Activated CD4-positive, alpha-beta memory T cell treated with anti-CD3 and anti-CD28 coated beads for 36 hours (primary cell): ENCODE measurements at regions of chr7 and their contacts with region 1.

Region 1: DNA sequence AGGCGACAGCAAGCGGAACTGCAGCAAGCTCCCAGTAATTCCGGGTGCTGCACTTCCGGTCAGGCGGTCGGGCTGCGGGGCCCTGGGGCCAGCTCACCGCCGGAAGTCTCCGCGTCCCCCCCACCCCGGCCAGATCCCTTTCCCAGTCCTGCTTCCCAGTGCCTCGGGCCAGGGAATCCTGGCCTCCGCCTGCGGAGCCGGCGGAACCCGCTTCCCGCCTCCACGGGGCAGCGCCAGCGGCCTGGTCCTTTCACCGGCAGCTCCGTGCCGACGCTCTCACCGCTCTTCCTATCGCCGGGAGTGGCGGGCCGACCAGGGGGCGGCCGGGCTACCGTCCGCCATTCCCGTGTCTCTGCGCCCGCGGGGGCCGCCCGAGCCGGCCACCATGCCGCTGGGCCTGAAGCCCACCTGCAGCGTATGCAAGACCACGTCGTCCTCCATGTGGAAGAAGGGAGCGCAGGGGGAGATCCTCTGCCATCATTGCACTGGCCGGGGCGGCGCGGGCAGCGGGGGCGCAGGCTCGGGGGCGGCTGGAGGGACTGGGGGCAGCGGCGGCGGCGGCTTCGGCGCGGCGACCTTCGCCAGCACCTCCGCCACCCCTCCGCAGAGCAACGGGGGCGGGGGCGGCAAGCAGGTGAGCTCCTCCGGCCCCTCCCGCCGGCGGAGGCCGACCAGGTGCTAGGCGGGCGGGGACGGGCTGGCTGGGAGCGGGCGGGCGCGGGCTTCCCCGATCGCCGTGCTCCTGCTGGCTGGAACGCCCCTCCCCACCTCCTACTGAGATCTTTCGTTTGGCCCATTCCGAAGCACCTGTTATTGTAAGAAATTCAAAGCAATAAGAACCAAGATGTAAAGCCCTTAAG is at the start of gene GATAD1:
- DNase-seq: peak; percentile 88
- H3K4me3 Mint-ChIP-seq: peak within 1 kb of the TSS; percentile 82
- H3K27ac Mint-ChIP-seq: peak within 1 kb of the TSS; percentile 81
- H3K4me1 Mint-ChIP-seq: peaks cover 16% of the 10 kb centered on the region
- H3K27me3 Mint-ChIP-seq: no peaks in the 10 kb centered on the region
- total RNA-seq, gene GATAD1: 19.4 to 21.2 TPM

Region 2: GRCh38 chr7:91264046-91264923 is 1183.3 kb before region 1 on chr7 and contains the start of gene FZD1:
- CTCF ChIA-PET with region 1: no interaction called
- POLR2A ChIA-PET with region 1: no interaction called
- intact Hi-C with region 1: loop called (anchors 5 kb)
- DNase-seq: peak; percentile 79
- H3K4me3 Mint-ChIP-seq: peak within 1 kb of the TSS; percentile 64
- H3K27ac Mint-ChIP-seq: no peak within 1 kb of the TSS
- H3K4me1 Mint-ChIP-seq: peaks cover 1% of the 10 kb centered on the region
- H3K27me3 Mint-ChIP-seq: peaks cover 54% of the 10 kb centered on the region
- total RNA-seq, gene FZD1: 0.05 TPM in 1 of 2 experiments, not detected in the other

Region 3: DNA sequence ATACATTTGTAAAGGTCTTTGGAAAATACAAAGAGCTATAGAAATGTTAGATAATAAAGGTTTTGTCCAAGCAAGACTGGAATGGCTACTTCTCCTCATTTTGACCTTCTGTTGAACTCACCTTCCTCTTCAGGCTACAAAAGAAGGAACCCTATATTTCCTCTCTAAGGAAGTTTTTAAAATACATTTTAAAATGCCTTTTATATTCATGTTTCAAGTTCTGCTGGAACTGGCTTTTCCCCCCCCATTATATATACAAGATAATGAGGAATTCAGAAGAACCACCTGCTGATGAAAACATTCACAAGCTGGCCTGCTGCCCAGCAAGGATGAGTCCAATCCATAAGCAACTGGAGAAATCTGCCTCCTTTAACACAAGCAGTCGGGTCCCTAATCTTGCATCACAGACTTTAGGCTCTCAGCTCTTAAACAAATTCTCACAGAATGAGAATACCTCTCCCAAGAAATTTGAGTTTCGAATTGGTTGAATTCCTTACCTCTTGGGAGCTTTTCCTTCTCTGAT is 611.7 kb before region 1 on chr7:
- CTCF ChIA-PET with region 1: interaction called, 15 read pairs
- POLR2A ChIA-PET with region 1: no interaction called
- intact Hi-C with region 1: no loop called
- DNase-seq: no peak
- H3K4me3 Mint-ChIP-seq: no peak overlapping the region
- H3K27ac Mint-ChIP-seq: no peak overlapping the region
- H3K4me1 Mint-ChIP-seq: no peaks in the 10 kb centered on the region
- H3K27me3 Mint-ChIP-seq: no peaks in the 10 kb centered on the region

Region 4: DNA sequence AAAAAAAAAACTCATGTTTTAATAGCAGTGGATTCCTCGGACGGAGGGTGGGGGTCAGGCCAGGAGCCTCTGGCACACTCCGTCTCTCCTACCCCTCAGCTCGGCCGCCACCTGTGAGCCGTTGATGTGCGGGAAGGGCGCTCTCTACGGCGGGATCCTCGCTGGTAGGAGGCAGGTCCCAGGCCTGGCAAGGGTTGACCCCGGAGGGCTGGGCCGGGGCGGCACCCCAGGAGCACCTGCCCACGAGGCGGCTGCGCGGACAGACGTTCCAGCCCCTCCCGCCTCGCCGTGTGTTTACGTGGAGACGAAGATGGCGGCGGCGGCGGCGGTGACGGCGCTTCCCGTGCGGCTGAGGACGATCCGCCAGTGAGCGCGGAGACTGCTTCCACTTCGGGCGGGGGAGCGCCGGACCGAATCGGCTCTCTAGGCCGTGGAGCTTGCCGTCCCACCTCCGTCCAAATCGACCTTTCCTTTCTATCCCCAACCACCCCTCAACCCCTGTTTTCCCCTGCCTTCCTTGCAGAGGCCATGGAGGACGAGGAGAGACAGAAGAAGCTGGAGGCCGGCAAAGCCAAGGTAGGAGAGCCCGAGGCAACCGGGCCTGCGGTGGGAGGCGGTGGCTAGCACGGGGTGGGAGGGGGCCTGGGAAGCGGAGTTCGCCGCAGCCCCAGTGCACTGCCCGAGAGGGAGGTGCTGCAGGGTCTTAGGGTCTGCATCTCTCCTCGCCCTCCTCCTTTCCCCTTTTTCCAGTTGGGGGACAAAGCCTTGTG is 506.8 kb before region 1 on chr7 and contains the start of gene AKAP9:
- CTCF ChIA-PET with region 1: interaction called, 6 read pairs
- POLR2A ChIA-PET with region 1: interaction called, 3 read pairs
- intact Hi-C with region 1: loop called (anchors 2 kb)
- DNase-seq: peak; percentile 93
- H3K4me3 Mint-ChIP-seq: peak within 1 kb of the TSS; percentile 92
- H3K27ac Mint-ChIP-seq: peak within 1 kb of the TSS; percentile 86
- H3K4me1 Mint-ChIP-seq: peaks cover 35% of the 10 kb centered on the region
- H3K27me3 Mint-ChIP-seq: peaks cover 1% of the 10 kb centered on the region
- total RNA-seq, gene AKAP9: 23.5 to 25.3 TPM

Region 5: GRCh38 chr7:92178927-92179924 is 268.3 kb before region 1 on chr7 and contains the start of gene LRRD1:
- CTCF ChIA-PET with region 1: interaction called, 14 read pairs
- POLR2A ChIA-PET with region 1: interaction called, 3 read pairs
- intact Hi-C with region 1: loop called (anchors 1 kb)
- DNase-seq: peak; percentile 94
- H3K4me3 Mint-ChIP-seq: peak within 1 kb of the TSS; percentile 67
- H3K27ac Mint-ChIP-seq: no peak within 1 kb of the TSS
- H3K4me1 Mint-ChIP-seq: peaks cover 10% of the 10 kb centered on the region
- H3K27me3 Mint-ChIP-seq: no peaks in the 10 kb centered on the region
- total RNA-seq, gene LRRD1: not detected

Region 6: DNA sequence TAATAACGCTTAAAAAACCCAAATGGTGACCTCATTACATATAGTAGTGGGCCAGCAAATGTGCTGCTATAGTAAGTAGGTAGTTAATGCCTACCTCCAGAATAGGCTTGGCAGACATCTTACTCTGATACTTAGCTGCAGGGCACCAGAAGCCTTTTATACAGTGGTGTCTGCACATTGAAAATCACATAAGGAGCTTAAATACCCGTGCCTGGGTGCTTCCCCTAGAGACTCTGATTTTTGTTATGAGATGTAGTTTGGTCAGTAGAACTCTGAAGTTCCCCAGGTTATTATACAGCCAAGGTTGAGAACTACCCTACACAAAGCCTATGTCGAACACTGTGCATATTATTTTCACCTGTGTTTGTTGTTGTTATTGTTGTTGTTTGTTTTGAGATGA is 154.6 kb before region 1 on chr7:
- CTCF ChIA-PET with region 1: no interaction called
- POLR2A ChIA-PET with region 1: no interaction called
- intact Hi-C with region 1: no loop called
- DNase-seq: no peak
- H3K4me3 Mint-ChIP-seq: no peak overlapping the region
- H3K27ac Mint-ChIP-seq: no peak overlapping the region
- H3K4me1 Mint-ChIP-seq: peaks cover 32% of the 10 kb centered on the region
- H3K27me3 Mint-ChIP-seq: no peaks in the 10 kb centered on the region

Region 7: GRCh38 chr7:92421676-92422435 is 25.7 kb before region 1 on chr7:
- CTCF ChIA-PET with region 1: interaction called, 125 read pairs
- POLR2A ChIA-PET with region 1: interaction called, 3 read pairs
- intact Hi-C with region 1: loop called (anchors 1 kb)
- DNase-seq: no peak
- H3K4me3 Mint-ChIP-seq: no peak overlapping the region
- H3K27ac Mint-ChIP-seq: no peak overlapping the region
- H3K4me1 Mint-ChIP-seq: peaks cover 10% of the 10 kb centered on the region
- H3K27me3 Mint-ChIP-seq: peaks cover 13% of the 10 kb centered on the region

Region 8: DNA sequence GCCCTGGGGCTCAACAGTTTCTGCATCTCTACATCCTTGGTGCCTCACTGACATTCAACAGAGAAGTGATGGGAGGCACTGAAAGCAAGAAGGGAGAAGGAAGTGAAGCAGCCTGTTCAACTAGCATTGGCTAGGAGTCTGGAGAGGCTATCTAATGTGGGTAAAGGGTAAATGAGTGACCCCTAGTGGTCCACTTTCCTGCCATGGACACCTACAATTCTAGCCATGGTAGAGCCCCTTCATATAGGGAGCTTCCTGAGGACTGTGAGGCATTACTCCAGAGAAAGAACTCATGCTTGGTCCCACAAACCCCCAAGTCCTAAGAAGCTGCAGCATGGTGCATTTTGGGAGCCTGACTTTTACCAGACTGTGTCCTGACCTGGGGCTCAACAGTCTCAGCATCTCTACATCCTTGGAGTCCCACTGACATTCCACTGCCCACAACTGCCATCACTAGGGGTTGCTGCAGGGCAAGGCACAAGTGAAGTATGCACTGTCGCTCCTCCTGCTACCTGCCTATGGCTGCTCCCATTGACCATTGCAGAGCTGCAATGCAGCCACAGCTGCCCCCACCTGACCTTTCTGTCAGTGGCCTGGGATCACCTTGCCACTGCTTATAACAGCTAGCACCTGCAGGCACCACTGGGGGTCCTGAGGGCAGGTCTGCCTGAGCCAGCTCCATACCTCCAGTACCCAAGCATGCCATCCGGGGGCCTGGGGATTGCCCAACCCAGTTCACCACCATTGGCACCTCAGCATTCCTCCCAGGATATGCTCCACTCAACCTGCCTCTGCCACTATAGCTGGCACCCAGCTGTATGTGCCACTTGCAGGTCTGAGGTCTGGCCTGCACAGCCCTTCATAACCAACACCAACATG is 432.9 kb after region 1 on chr7:
- CTCF ChIA-PET with region 1: no interaction called
- POLR2A ChIA-PET with region 1: no interaction called
- intact Hi-C with region 1: no loop called
- DNase-seq: peak; percentile 44
- H3K4me3 Mint-ChIP-seq: no peak overlapping the region
- H3K27ac Mint-ChIP-seq: no peak overlapping the region
- H3K4me1 Mint-ChIP-seq: peaks cover 36% of the 10 kb centered on the region
- H3K27me3 Mint-ChIP-seq: no peaks in the 10 kb centered on the region